ENCODE measurements at regions of chr6 and their contacts with region 1.

Region 1: GRCh38 chr6:32718879-32719278 is 22.3 kb upstream of the HLA-DQA2 start:
- DNase-seq: no peak
- ATAC-seq: no peak
- H3K4me3 ChIP-seq: no peak overlapping the region
- H3K27ac ChIP-seq: no peak overlapping the region
- H3K4me1 ChIP-seq: no peaks in the 10 kb centered on the region
- H3K27me3 ChIP-seq: peaks cover 0 to 74% (median 0%) of the 10 kb centered on the region in 7 donors
- CTCF ChIP-seq: no peak

Region 2: DNA sequence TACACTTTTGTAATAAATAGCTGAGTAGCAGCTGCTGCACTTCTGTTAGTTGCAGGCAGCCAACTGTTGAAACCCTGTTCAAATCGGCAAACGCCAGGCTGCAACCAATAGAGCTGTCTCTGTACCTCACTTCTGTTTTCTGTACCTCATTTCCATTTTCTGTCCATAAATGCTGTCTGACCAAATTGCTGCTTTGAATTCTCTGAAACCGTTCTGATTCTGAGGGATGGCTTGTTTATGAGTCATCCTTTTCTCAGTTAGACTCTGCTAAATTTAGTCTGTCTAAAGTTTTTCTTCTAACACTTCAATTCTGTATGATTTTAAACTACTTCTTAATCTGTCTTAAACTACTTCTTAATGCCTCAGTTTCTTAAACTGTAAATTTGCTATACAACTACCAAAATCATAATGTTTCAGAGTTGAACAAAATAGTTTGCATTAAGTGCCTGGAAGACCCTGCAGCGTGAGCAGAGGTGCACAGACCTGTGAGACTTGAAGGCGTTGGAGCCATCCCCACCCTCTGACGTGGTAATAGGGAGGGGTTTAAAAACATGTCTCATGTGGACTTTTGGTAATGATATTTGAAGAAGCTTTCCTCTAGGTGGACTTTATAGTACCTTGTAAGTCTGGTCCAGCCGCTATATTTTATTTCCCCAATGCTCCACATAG is 321.5 kb before region 1 on chr6:
- intact Hi-C with region 1: no loop called
- DNase-seq: no peak
- ATAC-seq: no peak
- H3K4me3 ChIP-seq: no peak overlapping the region
- H3K27ac ChIP-seq: no peak overlapping the region
- H3K4me1 ChIP-seq: peaks cover 0 to 19% (median 3%) of the 10 kb centered on the region in 9 donors
- H3K27me3 ChIP-seq: peaks cover 0 to 5% (median 0%) of the 10 kb centered on the region in 7 donors
- CTCF ChIP-seq: no peak

Region 3: GRCh38 chr6:32669240-32669639 is 49.6 kb before region 1 on chr6:
- intact Hi-C with region 1: no loop called
- DNase-seq: no peak
- ATAC-seq: no peak
- H3K4me3 ChIP-seq: no peak overlapping the region
- H3K27ac ChIP-seq: peak overlapping the region in 1 of 10 donors; percentile 77
- H3K4me1 ChIP-seq: peaks cover 0 to 9% (median 0%) of the 10 kb centered on the region in 9 donors
- H3K27me3 ChIP-seq: peaks cover 0 to 14% (median 0%) of the 10 kb centered on the region in 7 donors
- CTCF ChIP-seq: no peak

Region 4: GRCh38 chr6:32752580-32752979 is 33.7 kb after region 1 on chr6:
- intact Hi-C with region 1: no loop called
- DNase-seq: no peak
- ATAC-seq: no peak
- H3K4me3 ChIP-seq: no peak overlapping the region
- H3K27ac ChIP-seq: no peak overlapping the region
- H3K4me1 ChIP-seq: no peaks in the 10 kb centered on the region
- H3K27me3 ChIP-seq: peaks cover 0 to 84% (median 55%) of the 10 kb centered on the region in 7 donors
- CTCF ChIP-seq: no peak

Region 5: GRCh38 chr6:32774426-32774825 is 55.5 kb after region 1 on chr6:
- intact Hi-C with region 1: loop called in 1 of 10 experiments (anchors 10 kb)
- DNase-seq: no peak
- ATAC-seq: no peak
- H3K4me3 ChIP-seq: no peak overlapping the region
- H3K27ac ChIP-seq: no peak overlapping the region
- H3K4me1 ChIP-seq: no peaks in the 10 kb centered on the region
- H3K27me3 ChIP-seq: peaks cover 0 to 37% (median 19%) of the 10 kb centered on the region in 7 donors
- CTCF ChIP-seq: no peak

Measured in heart right ventricle (tissue), 16 donors.